Keratinocyte (primary cell): ENCODE measurements at regions of chr14 and their contacts with region 1.

Region 1: DNA sequence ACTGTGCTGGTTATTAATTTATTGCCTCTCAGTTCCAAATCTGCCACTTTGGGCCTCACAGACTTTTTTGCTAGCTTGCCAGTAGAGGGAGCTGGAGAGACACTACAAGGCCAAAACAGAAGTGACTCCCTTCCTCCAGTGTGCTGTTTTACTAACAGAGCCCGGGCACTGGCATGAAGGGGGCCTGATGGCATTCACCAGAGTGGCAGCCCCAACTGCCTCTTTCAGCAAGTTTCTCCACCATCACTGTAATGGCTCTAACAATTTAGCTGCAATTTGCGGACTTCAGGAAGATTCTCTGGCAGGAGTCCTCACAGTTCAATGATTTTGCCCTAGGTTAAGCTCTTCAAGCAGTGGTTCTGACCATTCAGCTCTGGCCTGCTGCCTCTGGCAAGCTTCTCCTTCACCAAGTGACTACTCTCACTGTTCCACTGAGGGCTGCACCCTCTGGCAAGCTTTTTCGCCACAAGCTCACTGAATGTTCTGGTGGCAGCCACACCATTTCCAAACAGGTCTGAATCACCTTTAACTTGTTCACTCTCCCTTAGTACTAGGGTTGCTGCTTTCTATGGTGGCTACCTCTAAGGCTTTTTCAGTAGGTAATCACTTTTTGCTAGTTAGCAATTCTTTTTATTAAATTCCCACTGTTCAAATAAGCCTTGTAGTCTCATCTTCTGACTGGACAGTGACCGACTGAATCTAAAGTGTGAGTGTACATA is 104.9 kb downstream of the ZC3H14 start:
- DNase-seq: peak; percentile 23
- H3K4me3 ChIP-seq: no peak overlapping the region
- H3K27ac ChIP-seq: no peak overlapping the region
- H3K4me1 ChIP-seq: peaks cover 4% of the 10 kb centered on the region
- H3K27me3 ChIP-seq: no peaks in the 10 kb centered on the region
- CTCF ChIP-seq: peak; percentile 79 to 90 (median 88)

Region 2: GRCh38 chr14:88868558-88869159 is 200.9 kb after region 1 on chr14:
- dilution Hi-C with region 1: loop called (anchors 25 kb)
- DNase-seq: no peak
- H3K4me3 ChIP-seq: no peak overlapping the region
- H3K27ac ChIP-seq: no peak overlapping the region
- H3K4me1 ChIP-seq: no peaks in the 10 kb centered on the region
- H3K27me3 ChIP-seq: no peaks in the 10 kb centered on the region
- CTCF ChIP-seq: peak in 2 of 3 experiments; percentile 26 to 40